Gastrocnemius medialis (tissue), 4 donors: ENCODE measurements at regions of chr9 and their contacts with region 1.

Region 1: DNA sequence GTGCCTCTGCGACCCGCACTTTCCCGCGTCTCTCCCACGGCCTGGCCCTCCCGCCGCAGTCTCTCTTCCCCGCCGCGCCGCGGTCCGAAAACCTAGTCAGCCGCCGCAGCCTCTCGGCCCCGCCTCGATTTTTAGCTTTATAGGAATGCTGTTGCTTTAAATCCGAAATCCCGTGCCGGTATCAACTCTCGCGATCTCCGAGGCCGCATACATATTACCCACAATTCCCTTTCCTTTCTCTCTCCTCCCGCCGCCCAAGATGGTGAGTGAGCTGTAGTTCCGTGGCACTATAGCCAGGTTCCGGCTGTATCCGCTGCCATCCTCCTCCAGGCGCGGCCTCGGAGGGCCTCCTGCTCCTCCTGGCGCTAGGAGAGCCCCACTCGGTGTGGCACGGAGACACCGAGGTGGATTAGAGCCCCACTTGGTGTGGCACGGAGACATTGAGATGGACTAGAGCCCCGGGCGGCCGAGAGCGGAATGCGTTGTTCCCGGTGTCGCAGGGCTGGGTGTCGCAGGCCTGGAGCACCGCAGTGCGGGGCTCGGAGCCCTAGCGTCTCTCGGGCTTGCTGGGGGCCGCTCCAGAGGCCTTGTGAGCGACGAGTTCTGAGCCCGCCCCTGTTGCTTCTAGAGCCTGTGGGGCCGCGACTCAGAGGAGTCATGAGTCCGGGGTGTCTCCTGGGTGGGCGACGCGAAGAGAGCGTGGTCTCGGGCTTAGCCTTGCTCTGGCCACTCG is at the starts of genes MED22 and RPL7A:
- DNase-seq: peak; percentile 86 to 95
- ATAC-seq: peak; percentile 97
- H3K4me3 ChIP-seq: peak within 1 kb of the TSS; percentile 91 to 99 (median 97)
- H3K27ac ChIP-seq: peak within 1 kb of the TSS; percentile 88 to 97 (median 90)
- H3K4me1 ChIP-seq: peaks cover 22 to 30% of the 10 kb centered on the region in 2 donors
- H3K27me3 ChIP-seq: no peaks in the 10 kb centered on the region
- CTCF ChIP-seq: peak in 2 of 5 experiments; percentile 10 to 27
- POLR2A ChIP-seq: peak; percentile 82 to 89
- total RNA-seq, gene MED22: 8.5 to 23.4 (median 13.0) TPM
- total RNA-seq, gene RPL7A: 1,001 to 1,630 (median 1,510) TPM

Region 2: DNA sequence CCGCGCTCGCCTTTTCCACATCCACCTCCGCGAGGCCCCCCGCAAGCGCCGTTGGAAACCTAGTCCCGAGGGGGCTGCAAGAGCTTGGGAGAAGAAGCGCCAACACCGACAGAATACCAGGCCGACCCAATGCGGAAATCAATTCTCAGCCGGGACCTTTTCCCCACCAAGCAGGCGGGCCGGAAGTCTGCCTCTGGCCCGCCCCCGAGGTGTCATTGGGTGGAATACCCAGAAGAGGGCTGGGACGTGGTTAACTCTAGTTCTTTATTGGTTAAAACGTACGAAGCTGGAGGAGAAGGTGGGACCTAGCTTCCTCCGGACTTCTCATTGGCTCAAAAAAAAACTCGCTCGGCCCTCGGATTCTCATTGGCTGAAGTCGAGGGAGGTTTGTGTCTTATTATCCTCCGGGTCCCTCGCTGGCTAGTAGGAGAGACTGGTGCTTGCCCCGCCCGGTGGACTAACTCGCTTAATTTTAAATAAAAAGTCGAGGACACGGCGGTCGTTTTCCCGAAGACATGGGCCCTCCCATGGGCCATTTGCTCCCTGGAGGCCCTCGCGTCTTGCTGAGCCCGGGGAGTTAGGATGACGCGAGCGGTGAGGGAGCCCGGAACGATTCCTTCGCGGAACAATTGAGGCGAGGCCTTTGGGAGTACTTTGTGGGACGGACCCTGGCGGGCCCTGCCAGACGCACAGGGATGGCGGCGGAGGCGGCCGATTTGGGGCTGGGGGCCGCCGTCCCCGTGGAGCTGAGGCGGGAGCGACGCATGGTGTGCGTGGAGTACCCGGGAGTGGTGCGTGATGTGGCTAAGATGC is 317.6 kb before region 1 on chr9 and contains the start of gene GTF3C5:
- in situ Hi-C with region 1: no loop called
- intact Hi-C with region 1: loop called (anchors 5 kb)
- DNase-seq: peak; percentile 92 to 94
- ATAC-seq: peak; percentile 99
- H3K4me3 ChIP-seq: peak within 1 kb of the TSS; percentile 85 to 97 (median 93)
- H3K27ac ChIP-seq: peak within 1 kb of the TSS; percentile 93 to 94 (median 94)
- H3K4me1 ChIP-seq: peaks cover 32 to 43% of the 10 kb centered on the region in 2 donors
- H3K27me3 ChIP-seq: no peaks in the 10 kb centered on the region
- CTCF ChIP-seq: peak in 2 of 5 experiments; percentile 16 to 30
- POLR2A ChIP-seq: peak; percentile 65 to 76
- total RNA-seq, gene GTF3C5: 48.1 to 55.3 (median 51.5) TPM

Region 3: GRCh38 chr9:133335878-133336811 is 12.0 kb before region 1 on chr9 and contains the start of gene SURF6:
- in situ Hi-C with region 1: no loop called
- intact Hi-C with region 1: loop called (anchors 1 kb)
- DNase-seq: peak; percentile 85 to 88
- ATAC-seq: peak; percentile 92 to 95
- H3K4me3 ChIP-seq: peak within 1 kb of the TSS; percentile 75 to 96 (median 90)
- H3K27ac ChIP-seq: peak within 1 kb of the TSS; percentile 80 to 90 (median 87)
- H3K4me1 ChIP-seq: peaks cover 22 to 30% of the 10 kb centered on the region in 2 donors
- H3K27me3 ChIP-seq: no peaks in the 10 kb centered on the region
- CTCF ChIP-seq: peak in 1 of 5 experiments; percentile 13
- POLR2A ChIP-seq: peak; percentile 65 to 70
- total RNA-seq, gene SURF6: 13.4 to 34.2 (median 28.0) TPM

Region 4: DNA sequence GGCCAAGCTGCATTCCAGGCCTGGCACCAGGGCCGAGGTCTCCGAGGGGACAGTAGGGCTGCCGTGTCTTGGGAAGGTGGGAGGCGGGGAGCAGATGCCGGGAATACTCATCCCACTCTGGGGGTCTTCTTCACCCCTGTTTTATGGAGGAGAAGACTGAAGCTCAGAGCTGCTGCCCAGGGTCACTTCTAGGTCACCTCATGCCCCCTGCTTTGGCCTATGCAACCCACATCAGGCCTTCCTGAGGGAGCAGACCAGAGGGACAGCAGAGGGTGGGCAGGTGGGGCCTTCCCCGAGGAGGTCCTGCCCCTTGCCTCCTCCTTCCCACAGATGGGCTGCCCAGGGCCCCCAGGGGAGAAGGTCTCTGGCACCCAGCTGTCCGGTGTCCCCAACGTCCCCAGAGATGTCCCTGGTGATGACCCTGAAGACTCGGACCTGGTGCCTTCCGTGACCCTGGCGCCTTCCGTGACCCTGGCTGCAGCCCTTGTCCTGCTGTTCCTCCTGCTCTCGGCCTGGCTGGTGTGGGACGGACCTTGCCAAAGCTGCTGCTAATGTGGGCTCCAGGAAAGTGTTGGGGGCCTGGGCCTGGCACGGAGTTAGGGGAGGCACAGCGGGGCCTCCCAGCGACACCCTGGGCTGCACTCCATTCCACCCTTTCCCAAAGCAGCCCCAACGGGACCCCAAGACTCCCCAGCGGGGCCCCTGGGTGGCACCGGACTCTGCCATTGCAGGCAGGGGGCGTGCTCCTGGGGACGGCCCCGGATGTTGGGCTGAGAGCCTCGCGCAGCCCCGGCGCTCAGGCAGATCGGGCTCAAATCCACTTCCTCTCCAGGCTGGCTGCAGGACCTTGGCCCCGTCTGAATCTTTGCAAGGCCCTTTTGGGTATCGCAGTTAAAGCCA is 137.5 kb after region 1 on chr9:
- in situ Hi-C with region 1: no loop called
- intact Hi-C with region 1: loop called (anchors 10 kb)
- DNase-seq: no peak
- ATAC-seq: no peak
- H3K4me3 ChIP-seq: no peak overlapping the region
- H3K27ac ChIP-seq: no peak overlapping the region
- H3K4me1 ChIP-seq: no peaks in the 10 kb centered on the region
- H3K27me3 ChIP-seq: no peaks in the 10 kb centered on the region
- CTCF ChIP-seq: no peak
- POLR2A ChIP-seq: no peak